Activated naive CD4-positive, alpha-beta T cell treated with anti-CD3 and anti-CD28 coated beads, Interleukin-2, amount 10 ng/mL, durations not matched to agents 7 days and 5 days (primary cell): ENCODE measurements at regions of chr20 and their contacts with region 1.

Region 1: DNA sequence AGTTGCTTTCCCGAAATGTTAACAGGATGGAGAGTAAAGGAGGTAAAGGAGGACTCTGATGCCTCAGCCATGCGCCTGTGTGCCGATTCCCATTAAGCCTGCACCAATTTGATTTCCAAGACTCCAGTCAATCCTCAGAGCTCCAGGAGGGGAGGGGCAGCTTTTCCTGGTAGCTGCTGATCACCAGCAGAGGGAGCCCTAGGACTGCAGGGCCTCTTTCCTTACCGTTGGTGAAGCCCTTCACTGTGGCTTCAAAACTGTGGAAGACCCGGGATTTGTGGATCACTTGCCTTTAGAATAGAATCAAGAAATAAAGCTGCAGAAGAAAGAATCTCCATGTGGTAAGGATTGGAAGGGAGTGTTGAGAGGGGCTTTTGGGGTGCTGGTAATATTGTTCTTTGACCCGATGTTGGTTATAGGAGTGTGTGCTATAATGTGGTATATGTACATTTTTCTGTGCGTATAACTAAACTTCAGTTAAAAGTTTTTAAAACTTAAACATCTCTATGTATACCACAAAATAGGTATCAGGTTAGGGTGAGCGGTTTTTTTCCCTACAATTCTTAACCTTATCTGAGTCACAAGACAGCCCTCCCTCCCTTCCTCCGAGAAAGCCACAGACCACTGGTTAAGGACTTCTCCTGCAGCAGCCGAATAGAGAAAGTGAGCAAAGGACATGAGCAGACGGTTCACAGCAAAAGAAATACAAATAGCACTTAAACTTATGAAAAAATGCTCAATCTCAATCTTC is 6.9 kb upstream of the OSER1 start:
- DNase-seq: peak; percentile 82
- H3K4me3 Mint-ChIP-seq: peak overlapping the region; percentile 72
- H3K27ac Mint-ChIP-seq: peak overlapping the region; percentile 89
- H3K4me1 Mint-ChIP-seq: peaks cover 58% of the 10 kb centered on the region
- H3K27me3 Mint-ChIP-seq: no peaks in the 10 kb centered on the region

Region 2: GRCh38 chr20:44104798-44105517 is 112.6 kb before region 1 on chr20:
- CTCF ChIA-PET with region 1: no interaction called
- DNase-seq: no peak
- H3K4me3 Mint-ChIP-seq: no peak overlapping the region
- H3K27ac Mint-ChIP-seq: no peak overlapping the region
- H3K4me1 Mint-ChIP-seq: no peaks in the 10 kb centered on the region
- H3K27me3 Mint-ChIP-seq: peaks cover 65% of the 10 kb centered on the region

Region 3: GRCh38 chr20:44310664-44311639 is 93.4 kb after region 1 on chr20 and contains the start of gene FITM2:
- CTCF ChIA-PET with region 1: interaction called, 351 read pairs
- DNase-seq: peak; percentile 98
- H3K4me3 Mint-ChIP-seq: peak within 1 kb of the TSS; percentile 89
- H3K27ac Mint-ChIP-seq: peak within 1 kb of the TSS; percentile 92
- H3K4me1 Mint-ChIP-seq: peaks cover 22% of the 10 kb centered on the region
- H3K27me3 Mint-ChIP-seq: peaks cover 13% of the 10 kb centered on the region

Region 4: GRCh38 chr20:44326391-44327159 is 109.1 kb after region 1 on chr20:
- CTCF ChIA-PET with region 1: interaction called, 17 read pairs
- DNase-seq: peak; percentile 25
- H3K4me3 Mint-ChIP-seq: no peak overlapping the region
- H3K27ac Mint-ChIP-seq: no peak overlapping the region
- H3K4me1 Mint-ChIP-seq: no peaks in the 10 kb centered on the region
- H3K27me3 Mint-ChIP-seq: peaks cover 24% of the 10 kb centered on the region